AG04449 (cell line): ENCODE measurements at regions of chr9 and their contacts with region 1.

Region 1: DNA sequence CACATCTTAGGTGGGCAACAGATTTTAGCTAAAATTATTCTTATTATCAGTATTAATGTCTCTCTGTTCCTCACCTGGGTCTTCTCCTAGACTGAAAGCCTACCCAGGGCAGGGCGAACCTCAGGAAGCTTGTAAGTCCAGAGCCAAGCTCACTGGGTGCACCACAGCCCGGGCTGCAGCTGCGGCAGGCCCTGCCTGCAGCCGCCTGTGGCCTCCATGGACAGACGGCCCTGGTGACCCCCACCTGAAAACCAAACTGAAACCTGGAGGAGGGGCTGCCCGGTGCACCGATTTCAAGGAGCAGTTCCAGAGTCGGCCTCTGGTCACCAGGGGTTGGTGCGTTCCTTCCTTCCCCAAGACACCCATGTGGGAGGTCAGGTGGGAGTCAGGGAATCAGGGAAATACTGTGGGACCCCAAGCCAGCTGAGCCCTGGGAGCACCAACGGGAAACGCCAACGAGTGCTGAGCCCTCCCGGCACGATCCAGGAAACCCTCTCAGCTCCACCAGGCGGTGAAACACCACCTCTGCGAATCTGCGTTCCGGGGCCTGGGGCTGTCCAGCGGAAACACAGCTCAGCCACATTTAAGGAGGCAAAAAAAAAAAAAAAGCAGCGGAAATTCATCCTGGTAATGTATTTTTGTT is 68.6 kb upstream of the PPP1R26 start:
- DNase-seq: no peak
- H3K4me3 ChIP-seq: no peak overlapping the region
- CTCF ChIP-seq: no peak

Region 2: DNA sequence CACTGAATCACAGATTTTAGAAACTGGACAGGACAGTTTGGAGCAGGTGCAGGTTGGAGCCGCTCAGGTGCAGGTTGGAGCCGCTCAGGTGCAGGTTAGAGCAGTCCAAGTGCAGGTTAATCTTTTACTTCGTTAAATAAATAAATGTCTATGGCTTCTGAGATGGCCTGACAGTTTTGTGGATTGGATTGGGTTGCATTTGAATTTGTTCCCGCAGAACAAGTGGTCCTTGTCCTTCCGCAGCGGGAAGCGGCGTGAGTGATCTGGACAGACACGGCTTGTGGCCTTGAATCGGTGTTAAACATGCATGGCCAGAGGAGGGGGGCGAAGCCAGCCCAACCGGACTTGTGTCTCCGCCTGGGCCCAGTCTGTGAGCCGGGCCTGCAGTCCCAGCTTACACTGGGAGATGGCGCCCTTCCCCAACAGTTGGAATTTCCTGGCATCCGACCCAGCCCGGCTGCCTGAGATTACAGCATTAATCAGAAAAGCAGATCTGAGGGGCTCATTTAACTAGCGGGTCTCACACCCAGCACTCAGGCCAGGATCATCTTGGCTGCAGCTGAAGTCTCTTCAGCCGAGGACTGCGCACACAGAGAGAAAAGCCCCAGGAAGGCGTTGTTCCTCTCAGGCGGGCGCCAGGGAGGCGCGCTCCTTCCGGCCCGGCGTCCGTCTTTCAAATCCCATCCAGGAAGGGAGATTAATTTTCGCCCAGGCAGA is 325.0 kb before region 1 on chr9:
- CTCF ChIA-PET with region 1: interaction called, 112 read pairs
- POLR2A ChIA-PET with region 1: no interaction called
- DNase-seq: no peak
- H3K4me3 ChIP-seq: no peak overlapping the region; the same call in 1 of the 2 replicates
- CTCF ChIP-seq: peak; percentile 90

Region 3: GRCh38 chr9:135422341-135422944 is 11.5 kb after region 1 on chr9:
- CTCF ChIA-PET with region 1: interaction called, 21 read pairs
- POLR2A ChIA-PET with region 1: no interaction called
- DNase-seq: no peak
- H3K4me3 ChIP-seq: no peak overlapping the region
- CTCF ChIP-seq: no peak